ENCODE measurements at regions of chr15 and their contacts with region 1.

Region 1: DNA sequence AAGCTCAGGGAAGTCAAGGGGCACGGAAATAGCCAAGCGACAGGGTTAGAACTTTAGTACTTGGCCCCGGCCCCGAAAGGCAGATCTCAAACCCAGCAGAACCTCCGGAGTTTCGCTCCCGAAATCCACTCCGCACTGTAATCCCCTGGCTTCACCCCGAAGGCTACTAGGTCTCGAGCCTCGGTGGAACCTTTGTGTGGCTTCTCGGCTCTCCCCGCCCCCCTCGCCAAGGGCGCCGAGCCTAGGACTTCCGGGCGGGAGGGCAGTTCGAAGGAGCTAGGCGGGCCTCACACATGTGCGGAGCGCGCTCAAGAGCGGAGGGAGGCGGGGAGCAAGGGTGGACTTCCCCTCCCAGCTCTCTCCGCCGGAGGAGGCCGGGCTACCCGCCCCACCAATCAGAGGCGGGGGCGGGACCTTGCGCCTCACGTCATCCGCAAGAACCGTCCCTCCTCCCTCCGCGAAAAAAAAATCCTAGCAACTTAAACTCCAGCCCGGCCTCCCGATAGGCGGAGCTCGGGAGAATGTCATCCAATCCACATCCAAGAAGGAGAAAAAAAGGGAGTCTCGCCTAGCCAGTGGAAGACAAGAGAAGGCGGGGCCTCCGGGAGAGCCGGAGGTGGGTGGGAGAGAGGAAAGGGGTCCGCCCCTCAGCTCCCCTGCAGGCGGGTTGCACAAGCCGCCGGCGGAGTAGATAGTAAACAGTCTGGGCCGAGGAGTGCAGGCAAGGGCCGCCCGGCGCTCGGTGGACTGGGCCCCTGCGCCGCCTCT is 2.4 kb upstream of the SIN3A start:
- DNase-seq: peak; percentile 99
- ATAC-seq: peak; percentile 72

Region 2: DNA sequence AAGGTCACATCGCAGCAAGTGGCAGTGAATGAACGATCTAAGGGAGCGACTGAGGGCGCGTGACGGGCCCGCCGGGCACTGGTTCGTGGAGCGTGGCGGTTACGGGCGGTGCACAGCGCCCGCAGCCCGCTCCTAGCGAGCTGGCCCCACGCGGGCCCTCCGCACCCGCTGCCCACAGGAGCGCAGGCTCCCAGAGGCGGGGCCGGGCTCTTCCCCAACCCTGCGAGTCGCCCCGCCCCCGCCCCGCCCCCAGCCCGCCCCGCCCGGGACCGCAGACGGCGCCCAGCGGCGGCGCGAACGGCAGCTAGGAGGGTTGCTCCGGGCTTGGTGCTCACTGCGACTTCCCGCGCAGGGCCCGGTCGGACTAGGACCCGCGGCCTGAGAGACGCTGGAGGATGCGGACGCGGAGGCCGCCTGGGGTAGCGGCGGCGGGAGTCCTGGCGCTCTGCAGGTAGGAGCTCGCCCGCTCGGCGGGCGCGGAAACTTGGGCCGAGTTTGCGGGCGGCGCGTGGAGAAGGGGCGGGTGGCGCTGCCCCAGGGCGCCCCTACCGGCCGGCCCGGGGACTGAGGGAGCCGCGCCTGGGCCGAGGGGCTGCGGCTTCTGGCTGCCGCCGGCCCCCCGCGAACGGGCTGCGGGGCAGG is 252.2 kb before region 1 on chr15 and contains the start of gene C15orf39:
- intact Hi-C with region 1: loop called (anchors 5 kb)
- DNase-seq: peak; percentile 92
- ATAC-seq: peak; percentile 82
- total RNA-seq, gene C15orf39: 15.0 TPM

Region 3: DNA sequence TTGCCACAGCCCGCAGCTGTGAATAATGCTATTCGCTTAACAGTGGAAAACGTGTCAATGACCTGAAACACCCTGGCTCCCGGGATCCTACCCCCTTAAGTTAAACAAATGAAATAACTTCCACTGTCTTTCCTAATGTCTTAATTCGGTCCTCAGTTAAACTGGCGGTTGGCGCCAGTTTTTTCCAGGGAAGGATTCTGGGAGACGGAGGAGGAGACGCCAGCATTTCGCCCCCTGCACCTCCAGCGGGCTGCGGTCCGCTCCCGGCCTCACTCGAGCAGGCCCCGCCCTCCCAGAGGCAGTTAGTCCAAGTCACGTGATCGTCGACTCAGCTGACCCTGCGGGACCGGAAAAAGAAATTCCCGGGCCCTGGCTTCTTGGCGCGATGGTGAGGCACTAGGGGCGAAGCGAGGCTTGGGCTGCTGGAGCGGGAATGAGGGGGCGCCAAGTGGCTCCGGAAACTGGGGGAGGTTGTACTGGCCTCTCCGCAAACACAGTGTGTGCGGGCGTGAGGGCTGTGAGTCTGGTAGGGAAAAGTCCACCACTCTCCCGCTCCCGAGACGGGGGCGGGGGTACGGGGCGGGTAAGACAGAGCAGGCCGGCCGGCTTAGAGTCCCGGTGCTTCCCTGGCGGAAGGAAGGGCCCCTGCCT is 118.1 kb before region 1 on chr15 and contains the start of gene COMMD4:
- intact Hi-C with region 1: no loop called
- DNase-seq: peak; percentile 96
- ATAC-seq: peak; percentile 92
- total RNA-seq, gene COMMD4: 42.1 TPM

Region 4: GRCh38 chr15:75367913-75368688 is 85.8 kb before region 1 on chr15 and contains the start of gene MAN2C1:
- intact Hi-C with region 1: loop called (anchors 2 kb)
- DNase-seq: peak; percentile 98
- ATAC-seq: peak; percentile 97
- total RNA-seq, gene MAN2C1: 89.2 TPM

Region 5: DNA sequence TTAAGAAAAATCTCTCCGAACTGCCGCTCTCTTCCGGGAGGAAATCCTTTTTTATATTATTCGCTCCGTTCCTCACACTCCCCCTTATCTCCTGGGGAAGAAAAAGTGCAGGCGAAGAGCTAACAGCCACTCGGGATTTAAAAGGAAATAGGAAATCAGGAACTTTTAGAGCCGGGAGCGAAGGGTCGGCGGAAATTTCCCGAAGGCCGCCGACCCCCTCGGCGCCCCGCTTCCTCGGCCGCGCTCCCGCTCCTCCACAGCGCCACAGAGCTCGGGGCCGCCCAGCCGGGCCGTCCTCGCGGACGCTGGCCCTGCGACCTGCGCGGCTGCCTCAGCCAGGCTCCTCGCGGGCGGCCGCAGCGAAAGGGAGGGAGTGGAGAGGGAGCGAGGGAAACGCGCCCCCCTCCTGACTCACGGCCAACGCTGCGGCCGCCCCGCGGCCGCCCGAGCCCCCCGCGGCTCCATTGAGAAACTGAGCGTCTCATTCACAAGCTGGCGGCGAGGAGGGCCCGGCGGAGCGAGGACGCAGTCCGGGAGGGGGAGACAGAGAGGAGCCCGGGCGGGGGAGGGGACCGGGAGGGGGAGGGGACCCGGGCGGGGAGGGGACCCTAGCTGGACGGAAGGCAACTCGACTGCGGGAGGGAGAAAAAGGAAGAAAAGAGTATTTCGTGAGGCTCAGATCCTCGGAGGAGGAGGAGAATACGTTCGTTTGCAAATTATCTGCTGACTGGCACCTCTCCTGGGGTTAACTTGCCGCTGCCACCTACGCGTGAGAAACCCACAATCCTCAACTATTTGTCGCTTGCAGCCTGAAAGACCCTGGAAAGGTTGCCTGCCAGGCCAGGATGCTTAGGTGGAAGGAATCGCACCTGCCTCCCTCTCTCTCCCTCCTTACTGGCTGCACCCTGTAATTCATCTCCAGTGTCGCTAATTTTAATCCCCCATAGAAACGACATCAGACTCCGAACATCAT is 125.3 kb after region 1 on chr15 and contains the start of gene PTPN9:
- intact Hi-C with region 1: loop called (anchors 5 kb)
- DNase-seq: peak; percentile 90
- ATAC-seq: peak; percentile 90
- total RNA-seq, gene PTPN9: 9.3 TPM

Region 6: GRCh38 chr15:75625542-75626347 is 171.9 kb after region 1 on chr15 and contains the start of gene SNUPN:
- intact Hi-C with region 1: loop called (anchors 5 kb)
- DNase-seq: peak; percentile 97
- ATAC-seq: peak; percentile 94
- total RNA-seq, gene SNUPN: 19.4 TPM

Region 7: GRCh38 chr15:75647370-75648155 is 193.7 kb after region 1 on chr15 and contains the start of gene SNX33:
- intact Hi-C with region 1: loop called (anchors 5 kb)
- DNase-seq: peak; percentile 87
- ATAC-seq: peak; percentile 92
- total RNA-seq, gene SNX33: 13.3 TPM

Measured in Right ventricle myocardium inferior (tissue), 1 donor.